ENCODE measurements at regions of chr6 and their contacts with region 1.

Region 1: GRCh38 chr6:30914076-30914853 is at the start of gene VARS2:
- DNase-seq: peak; percentile 92
- ATAC-seq: peak; percentile 98
- H3K4me3 Mint-ChIP-seq: peak within 1 kb of the TSS; percentile 87
- H3K27ac Mint-ChIP-seq: peak within 1 kb of the TSS; percentile 95
- H3K4me1 Mint-ChIP-seq: peaks cover 24% of the 10 kb centered on the region
- H3K27me3 Mint-ChIP-seq: no peaks in the 10 kb centered on the region
- total RNA-seq, gene VARS2: 68.1 to 81.1 TPM

Region 2: DNA sequence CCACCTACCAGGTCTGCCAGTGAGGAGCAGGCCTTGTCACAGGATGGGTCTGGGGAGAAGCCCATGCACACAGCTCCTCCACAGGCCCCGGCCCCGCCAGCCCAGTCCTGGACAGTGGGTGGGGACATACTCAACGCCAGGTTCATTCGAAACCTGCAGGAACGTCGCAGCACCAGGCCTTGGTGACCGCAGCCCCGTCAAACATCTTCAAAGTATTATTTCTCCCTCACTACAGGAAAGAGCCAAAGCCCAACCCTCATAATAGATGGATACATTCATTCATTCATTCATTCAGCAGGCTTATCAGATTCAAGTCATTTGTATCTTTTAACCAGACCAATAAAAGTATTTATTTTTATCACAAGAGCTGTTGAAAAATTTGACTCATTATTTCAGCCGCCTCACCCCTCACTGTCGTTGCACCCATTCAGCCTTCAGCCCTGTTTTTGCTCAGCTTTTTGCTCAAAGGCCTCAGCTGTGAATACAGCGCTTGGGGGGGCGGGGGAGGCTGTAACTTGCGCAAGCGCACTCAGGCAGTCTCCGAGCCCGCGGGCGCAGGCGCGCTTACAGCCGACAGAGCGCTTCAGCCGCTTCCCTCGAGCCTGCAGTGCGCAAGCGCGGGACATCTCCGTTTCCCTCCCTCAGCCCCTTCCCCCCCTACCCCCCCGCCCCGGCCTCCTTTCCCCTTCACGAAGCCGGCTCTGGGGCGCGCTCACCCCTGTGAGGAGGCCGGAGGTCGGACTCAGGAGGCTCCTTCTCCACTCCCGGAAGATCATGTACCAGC is 267.6 kb before region 1 on chr6 and contains the start of gene C6orf136:
- CTCF ChIA-PET with region 1: no interaction called
- POLR2A ChIA-PET with region 1: no interaction called
- intact Hi-C with region 1: loop called in 1 of 2 experiments (anchors 1 kb)
- DNase-seq: peak; percentile 97
- ATAC-seq: peak; percentile 86
- H3K4me3 Mint-ChIP-seq: peak within 1 kb of the TSS; percentile 78
- H3K27ac Mint-ChIP-seq: peak within 1 kb of the TSS; percentile 88
- H3K4me1 Mint-ChIP-seq: peaks cover 20% of the 10 kb centered on the region
- H3K27me3 Mint-ChIP-seq: no peaks in the 10 kb centered on the region
- total RNA-seq, gene C6orf136: 26.5 to 30.8 TPM

Region 3: GRCh38 chr6:30742316-30743098 is 171.8 kb before region 1 on chr6 and contains the start of gene FLOT1:
- CTCF ChIA-PET with region 1: interaction called, 3 read pairs
- POLR2A ChIA-PET with region 1: no interaction called
- intact Hi-C with region 1: loop called in 1 of 2 experiments (anchors 1 kb)
- DNase-seq: peak; percentile 98
- ATAC-seq: peak; percentile 74
- H3K4me3 Mint-ChIP-seq: peak within 1 kb of the TSS; percentile 96
- H3K27ac Mint-ChIP-seq: peak within 1 kb of the TSS; percentile 95
- H3K4me1 Mint-ChIP-seq: peaks cover 67% of the 10 kb centered on the region
- H3K27me3 Mint-ChIP-seq: no peaks in the 10 kb centered on the region
- total RNA-seq, gene FLOT1: 155 to 188 TPM

Region 4: DNA sequence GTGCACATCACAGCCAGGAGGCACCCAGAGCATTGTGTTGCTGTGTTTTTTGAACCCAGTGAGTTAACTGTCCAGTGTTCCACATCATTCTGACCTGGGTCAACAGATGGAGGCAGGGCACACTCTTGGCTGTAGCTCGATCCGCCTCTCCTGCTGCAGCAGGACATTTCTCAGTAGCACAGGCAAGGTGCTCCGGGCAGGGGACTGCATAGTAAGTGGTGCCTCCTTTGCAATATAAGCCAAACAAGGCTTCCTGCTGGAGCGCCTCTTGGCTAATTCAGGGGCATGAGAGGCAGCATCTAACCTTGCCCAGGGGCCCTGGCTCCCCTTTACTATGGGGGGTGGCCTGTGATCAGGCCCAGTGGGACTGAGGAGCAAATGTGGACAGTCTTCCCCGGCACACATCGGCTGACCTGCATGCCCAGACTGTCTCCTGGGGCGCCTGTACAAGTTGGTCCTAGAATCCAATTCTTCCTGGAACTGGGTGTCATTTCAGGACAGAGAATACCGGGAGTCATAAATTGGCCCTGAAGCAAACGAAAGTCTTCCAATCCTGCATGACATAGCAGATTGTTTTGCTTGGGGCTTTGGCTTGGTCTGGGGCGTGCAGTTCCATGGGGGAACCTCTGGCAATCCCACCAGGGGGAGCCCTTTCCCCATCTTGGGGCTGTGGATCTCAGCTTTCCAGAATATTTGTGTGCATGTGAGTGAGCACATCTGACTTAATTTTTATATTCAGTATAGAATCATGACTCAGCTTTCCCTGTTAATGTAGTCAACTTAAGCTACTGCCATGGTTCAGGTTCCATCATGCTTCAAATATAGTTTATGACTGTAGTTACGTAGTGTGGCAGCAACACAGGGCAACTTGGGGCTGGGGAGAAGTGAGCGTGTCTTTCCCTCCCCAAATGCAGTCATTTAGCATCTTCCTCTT is 86.0 kb before region 1 on chr6:
- CTCF ChIA-PET with region 1: interaction called, 18 read pairs
- POLR2A ChIA-PET with region 1: interaction called, 3 read pairs
- intact Hi-C with region 1: loop called in 1 of 2 experiments (anchors 1 kb)
- DNase-seq: peak; percentile 92
- ATAC-seq: peak; percentile 83
- H3K4me3 Mint-ChIP-seq: peak overlapping the region; percentile 66
- H3K27ac Mint-ChIP-seq: peak overlapping the region; percentile 97
- H3K4me1 Mint-ChIP-seq: peaks cover 65% of the 10 kb centered on the region
- H3K27me3 Mint-ChIP-seq: no peaks in the 10 kb centered on the region

Region 5: DNA sequence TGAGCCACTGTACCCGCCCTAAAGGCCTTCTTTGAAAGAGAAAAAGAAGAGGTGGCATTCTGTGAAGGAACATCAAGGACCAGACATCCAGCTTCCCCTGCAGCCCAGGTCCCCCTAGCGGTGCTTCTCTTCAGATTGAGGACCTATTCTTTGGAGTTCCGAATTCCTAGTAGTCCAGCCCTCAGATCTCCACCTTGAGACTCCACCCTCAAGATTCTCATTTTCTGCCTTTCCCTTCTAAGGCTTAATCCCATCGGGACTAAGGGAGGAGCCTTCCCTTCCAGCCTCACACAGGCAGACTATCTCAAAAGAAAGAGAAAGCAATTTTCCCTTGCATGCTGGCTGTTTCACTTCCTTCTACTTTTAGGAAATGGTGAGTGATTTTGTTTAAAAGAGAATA is 128.5 kb after region 1 on chr6:
- CTCF ChIA-PET with region 1: interaction called, 3 read pairs
- POLR2A ChIA-PET with region 1: no interaction called
- intact Hi-C with region 1: loop called (anchors 1 to 2 kb)
- DNase-seq: peak; percentile 57
- ATAC-seq: no peak
- H3K4me3 Mint-ChIP-seq: no peak overlapping the region
- H3K27ac Mint-ChIP-seq: no peak overlapping the region
- H3K4me1 Mint-ChIP-seq: peaks cover 2% of the 10 kb centered on the region
- H3K27me3 Mint-ChIP-seq: peaks cover 17% of the 10 kb centered on the region

Region 6: DNA sequence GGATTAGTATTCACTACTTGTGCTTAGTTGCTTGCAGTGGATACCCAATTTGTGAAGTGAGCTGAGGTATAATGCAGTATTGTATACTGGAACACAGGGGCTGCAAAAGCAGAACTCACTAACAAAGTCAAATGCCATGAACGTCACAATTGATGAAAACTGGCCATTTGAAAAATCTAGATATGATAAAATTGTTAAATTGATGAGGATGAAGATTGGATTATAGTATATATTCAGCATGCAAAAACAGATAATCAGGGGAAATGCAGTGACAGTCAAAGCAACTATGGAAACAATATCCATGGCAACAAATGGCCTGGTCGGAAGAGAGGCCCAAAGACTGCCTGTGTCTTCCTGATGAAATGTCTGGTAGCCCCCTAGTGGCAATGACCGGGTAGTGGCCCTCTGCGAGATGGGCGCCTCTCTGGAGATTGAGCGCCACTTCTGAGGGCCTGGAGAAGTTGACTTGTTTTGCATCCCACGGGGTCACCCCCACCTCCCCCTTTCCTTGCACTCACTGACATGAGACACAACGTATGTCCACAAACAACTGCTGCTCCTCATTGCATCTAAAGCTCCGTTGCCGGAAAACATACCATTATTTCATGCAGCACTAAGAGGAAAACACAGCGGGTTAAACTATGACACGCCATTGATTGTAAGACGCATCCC is 154.5 kb after region 1 on chr6:
- CTCF ChIA-PET with region 1: interaction called, 10 read pairs
- POLR2A ChIA-PET with region 1: no interaction called
- intact Hi-C with region 1: loop called in 1 of 2 experiments (anchors 1 kb)
- DNase-seq: peak; percentile 82
- ATAC-seq: peak; percentile 99
- H3K4me3 Mint-ChIP-seq: no peak overlapping the region
- H3K27ac Mint-ChIP-seq: no peak overlapping the region
- H3K4me1 Mint-ChIP-seq: peaks cover 2% of the 10 kb centered on the region
- H3K27me3 Mint-ChIP-seq: peaks cover 2% of the 10 kb centered on the region

Region 7: DNA sequence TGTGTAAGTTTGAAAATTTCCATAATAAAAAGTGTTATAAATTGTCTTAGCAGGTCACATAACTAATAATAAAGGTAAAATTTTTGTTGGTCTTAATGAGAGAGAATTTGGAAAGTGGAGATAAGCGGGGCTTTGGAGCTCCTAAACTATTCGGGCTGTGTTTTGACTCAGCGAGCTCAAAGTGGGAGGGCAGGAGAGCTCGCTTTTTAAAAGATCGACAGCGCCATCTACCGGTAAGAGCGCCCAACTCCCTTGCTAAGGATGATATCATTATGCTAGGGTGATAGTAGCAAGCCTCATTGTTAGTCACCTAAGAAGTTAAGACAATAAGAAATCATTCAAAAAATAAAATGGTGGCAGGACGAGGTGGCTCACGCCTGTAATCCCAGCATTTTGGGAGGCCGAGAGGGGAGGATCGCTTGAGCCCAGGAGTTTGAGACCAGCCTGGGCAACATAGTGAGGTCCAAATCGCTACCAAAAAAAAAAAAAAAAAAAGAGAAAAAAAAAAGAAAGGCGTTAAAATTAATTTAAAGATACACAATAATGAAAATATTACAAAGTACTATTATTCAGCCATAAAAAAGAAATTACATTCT is 173.3 kb after region 1 on chr6:
- CTCF ChIA-PET with region 1: interaction called, 92 read pairs
- POLR2A ChIA-PET with region 1: no interaction called
- intact Hi-C with region 1: loop called (anchors 1 to 2 kb)
- DNase-seq: peak; percentile 94
- ATAC-seq: peak; percentile 96
- H3K4me3 Mint-ChIP-seq: no peak overlapping the region
- H3K27ac Mint-ChIP-seq: no peak overlapping the region
- H3K4me1 Mint-ChIP-seq: peaks cover 13% of the 10 kb centered on the region
- H3K27me3 Mint-ChIP-seq: no peaks in the 10 kb centered on the region

Measured in activated CD4-positive, alpha-beta T cell treated with anti-CD3 and anti-CD28 coated beads for 36 hours (primary cell).